Activated T-helper 2 cell treated with anti-CD3 and anti-CD28 coated beads, Interferon-gamma antibody, Interleukin-2, Interleukin-4, amounts not matched to agents 10 μg/mL and 5 μg/mL and 100 μg/mL, durations not matched to agents 14 hours and 24 hours and 36 hours (primary cell): ENCODE measurements at regions of chr11 and their contacts with region 1.

Region 1: GRCh38 chr11:75204685-75205563 is 35.6 kb upstream of the TPBGL start:
- DNase-seq: peak; percentile 67
- H3K4me3 Mint-ChIP-seq: no peak overlapping the region
- H3K27ac Mint-ChIP-seq: no peak overlapping the region
- H3K4me1 Mint-ChIP-seq: no peaks in the 10 kb centered on the region
- H3K27me3 Mint-ChIP-seq: peaks cover 16% of the 10 kb centered on the region

Region 2: GRCh38 chr11:75248690-75249268 is 43.9 kb after region 1 on chr11:
- intact Hi-C with region 1: loop called (anchors 2 kb)
- DNase-seq: peak; percentile 78
- H3K4me3 Mint-ChIP-seq: no peak overlapping the region
- H3K27ac Mint-ChIP-seq: no peak overlapping the region
- H3K4me1 Mint-ChIP-seq: no peaks in the 10 kb centered on the region
- H3K27me3 Mint-ChIP-seq: peaks cover 20% of the 10 kb centered on the region